CD8-positive, alpha-beta T cell (primary cell): ENCODE measurements at regions of chr20 and their contacts with region 1.

Region 1: DNA sequence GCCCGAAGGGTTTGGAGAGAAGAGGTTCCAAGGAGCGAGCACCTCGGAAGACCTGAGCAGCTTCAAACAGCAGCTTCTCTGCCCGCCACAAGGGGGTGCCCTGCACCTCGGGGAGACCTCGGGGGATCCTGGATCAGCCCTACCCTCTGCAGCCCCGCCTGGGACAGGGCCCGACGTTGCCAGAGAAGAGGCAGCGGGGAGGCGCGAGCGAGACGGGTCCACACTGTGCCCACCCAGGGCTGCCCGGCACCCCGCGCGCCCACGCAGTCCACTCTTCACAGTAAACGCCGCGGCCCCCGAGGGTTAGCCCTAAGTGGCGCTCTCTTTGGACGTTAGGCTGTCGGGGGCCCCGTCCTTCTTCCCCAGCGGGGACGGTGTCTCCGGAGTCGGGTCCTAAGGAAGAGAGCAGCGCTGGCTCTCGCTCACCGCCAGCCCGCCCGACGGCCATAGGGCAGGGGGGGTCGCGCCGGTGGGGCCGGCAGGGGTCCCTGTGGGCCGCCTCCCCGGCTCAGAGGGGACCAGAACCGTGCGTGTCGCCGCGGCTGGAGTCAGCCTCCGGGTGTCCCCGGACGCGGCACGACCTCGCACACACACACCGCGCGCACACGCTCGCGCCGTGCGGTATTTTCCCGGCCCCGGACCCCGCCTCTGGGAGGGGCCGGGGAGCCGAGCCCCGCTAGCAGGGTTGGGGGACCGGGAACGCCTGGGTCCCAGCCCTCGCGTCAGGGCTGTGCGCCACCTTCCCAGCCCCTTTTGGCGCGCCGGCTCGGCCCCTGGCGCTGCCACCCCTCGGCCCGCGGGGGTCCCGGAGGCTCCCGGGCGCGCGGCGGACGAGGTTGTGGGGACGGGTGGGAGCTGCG is 929 bp downstream of the CDH22 start:
- DNase-seq: peak; percentile 44 to 85 (median 77)
- ATAC-seq: peak; percentile 90
- H3K4me3 ChIP-seq: peak overlapping the region; percentile 32 to 37
- H3K4me3 Mint-ChIP-seq: peak overlapping the region; percentile 64
- H3K27ac ChIP-seq: no peak overlapping the region
- H3K27ac Mint-ChIP-seq: no peak overlapping the region
- H3K4me1 ChIP-seq: peaks cover 14% of the 10 kb centered on the region
- H3K4me1 Mint-ChIP-seq: peaks cover 14% of the 10 kb centered on the region
- H3K27me3 ChIP-seq: peaks cover 22 to 27% of the 10 kb centered on the region in 2 experiments
- H3K27me3 Mint-ChIP-seq: peaks cover 63% of the 10 kb centered on the region
- CTCF ChIP-seq: peak; percentile 86

Region 2: DNA sequence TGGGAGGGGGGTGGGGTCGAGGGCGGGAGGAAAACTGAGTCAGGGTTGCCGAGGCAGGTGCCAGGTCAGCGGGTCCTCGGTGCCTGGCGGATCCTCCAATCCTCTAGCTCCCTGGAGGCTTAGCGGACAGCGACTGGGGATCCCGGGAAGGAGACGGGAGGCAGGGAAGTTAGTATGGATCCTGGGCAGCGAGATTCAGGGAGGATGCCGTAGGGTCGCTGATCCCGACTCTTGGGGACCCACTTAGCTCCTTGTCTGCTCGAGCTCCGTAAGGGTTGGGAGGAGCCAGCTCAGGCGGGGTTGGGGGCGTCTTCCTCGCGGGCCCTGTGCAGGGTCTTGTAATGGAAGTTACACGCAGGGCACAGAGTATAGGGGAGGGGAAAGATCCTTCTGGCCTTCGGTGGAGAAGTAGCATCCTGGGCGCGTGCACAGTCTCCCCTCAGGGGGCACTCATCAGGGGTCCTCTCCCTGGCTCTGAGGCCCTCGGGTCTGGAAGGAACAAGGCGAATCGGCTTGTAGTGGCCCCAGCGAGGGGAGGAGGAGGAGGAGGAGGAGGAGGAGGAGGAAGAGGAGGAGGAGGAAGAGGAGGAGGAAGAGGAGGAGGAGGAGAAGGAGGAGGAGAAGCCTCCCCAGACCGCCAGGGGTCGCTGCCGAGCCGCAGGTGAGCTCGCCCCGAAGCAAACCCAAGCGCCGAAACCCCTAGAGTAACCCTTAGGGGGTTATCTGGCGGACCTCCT is 284.8 kb before region 1 on chr20:
- CTCF ChIA-PET with region 1: interaction called, 3 read pairs
- POLR2A ChIA-PET with region 1: no interaction called
- intact Hi-C with region 1: loop called in 1 of 2 experiments (anchors 5 kb)
- DNase-seq: peak; percentile 47 to 89 (median 79)
- ATAC-seq: peak; percentile 62
- H3K4me3 ChIP-seq: peak overlapping the region; percentile 22 to 42
- H3K4me3 Mint-ChIP-seq: peak overlapping the region; percentile 76
- H3K27ac ChIP-seq: no peak overlapping the region
- H3K27ac Mint-ChIP-seq: no peak overlapping the region
- H3K4me1 ChIP-seq: peaks cover 14% of the 10 kb centered on the region
- H3K4me1 Mint-ChIP-seq: peaks cover 20% of the 10 kb centered on the region
- H3K27me3 ChIP-seq: peaks cover 17 to 18% of the 10 kb centered on the region in 2 experiments
- H3K27me3 Mint-ChIP-seq: peaks cover 63% of the 10 kb centered on the region
- CTCF ChIP-seq: peak; percentile 58

Region 3: GRCh38 chr20:46363800-46364634 is 56.6 kb after region 1 on chr20:
- CTCF ChIA-PET with region 1: interaction called, 3 read pairs
- POLR2A ChIA-PET with region 1: no interaction called
- intact Hi-C with region 1: loop called (anchors 1 to 5 kb)
- DNase-seq: peak; percentile 70 to 94 (median 86)
- ATAC-seq: peak; percentile 67
- H3K4me3 ChIP-seq: peak overlapping the region; percentile 89 to 92
- H3K4me3 Mint-ChIP-seq: peak overlapping the region; percentile 90
- H3K27ac ChIP-seq: peak overlapping the region; percentile 97 to 98
- H3K27ac Mint-ChIP-seq: peak overlapping the region; percentile 97
- H3K4me1 ChIP-seq: peaks cover 70% of the 10 kb centered on the region
- H3K4me1 Mint-ChIP-seq: peaks cover 83% of the 10 kb centered on the region
- H3K27me3 ChIP-seq: no peaks in the 10 kb centered on the region
- H3K27me3 Mint-ChIP-seq: no peaks in the 10 kb centered on the region
- CTCF ChIP-seq: no peak

Region 4: GRCh38 chr20:46411637-46412036 is 104.3 kb after region 1 on chr20:
- CTCF ChIA-PET with region 1: interaction called, 39 read pairs
- POLR2A ChIA-PET with region 1: interaction called, 8 read pairs
- intact Hi-C with region 1: loop called (anchors 1 kb)
- DNase-seq: no peak
- ATAC-seq: no peak
- H3K4me3 ChIP-seq: no peak overlapping the region
- H3K4me3 Mint-ChIP-seq: no peak overlapping the region
- H3K27ac ChIP-seq: no peak overlapping the region
- H3K27ac Mint-ChIP-seq: no peak overlapping the region
- H3K4me1 ChIP-seq: peaks cover 13% of the 10 kb centered on the region
- H3K4me1 Mint-ChIP-seq: peaks cover 28% of the 10 kb centered on the region
- H3K27me3 ChIP-seq: no peaks in the 10 kb centered on the region
- H3K27me3 Mint-ChIP-seq: peaks cover 20% of the 10 kb centered on the region
- CTCF ChIP-seq: no peak

Region 5: GRCh38 chr20:46438156-46438750 is 130.9 kb after region 1 on chr20:
- CTCF ChIA-PET with region 1: interaction called, 25 read pairs
- POLR2A ChIA-PET with region 1: no interaction called
- intact Hi-C with region 1: loop called in 1 of 2 experiments (anchors 1 kb)
- DNase-seq: peak in 3 of 9 experiments; percentile 11 to 49 (median 46)
- ATAC-seq: peak; percentile 61
- H3K4me3 ChIP-seq: no peak overlapping the region
- H3K4me3 Mint-ChIP-seq: no peak overlapping the region
- H3K27ac ChIP-seq: no peak overlapping the region
- H3K27ac Mint-ChIP-seq: no peak overlapping the region
- H3K4me1 ChIP-seq: no peaks in the 10 kb centered on the region
- H3K4me1 Mint-ChIP-seq: no peaks in the 10 kb centered on the region
- H3K27me3 ChIP-seq: no peaks in the 10 kb centered on the region
- H3K27me3 Mint-ChIP-seq: peaks cover 48% of the 10 kb centered on the region
- CTCF ChIP-seq: no peak

Region 6: GRCh38 chr20:46681032-46681854 is 373.9 kb after region 1 on chr20:
- CTCF ChIA-PET with region 1: interaction called, 3 read pairs
- POLR2A ChIA-PET with region 1: no interaction called
- intact Hi-C with region 1: loop called in 1 of 2 experiments (anchors 1 kb)
- DNase-seq: peak; percentile 47 to 75 (median 68)
- ATAC-seq: peak; percentile 83
- H3K4me3 ChIP-seq: no peak overlapping the region
- H3K4me3 Mint-ChIP-seq: no peak overlapping the region
- H3K27ac ChIP-seq: no peak overlapping the region
- H3K27ac Mint-ChIP-seq: peak overlapping the region; percentile 43
- H3K4me1 ChIP-seq: peaks cover 18% of the 10 kb centered on the region
- H3K4me1 Mint-ChIP-seq: peaks cover 44% of the 10 kb centered on the region
- H3K27me3 ChIP-seq: no peaks in the 10 kb centered on the region
- H3K27me3 Mint-ChIP-seq: no peaks in the 10 kb centered on the region
- CTCF ChIP-seq: peak; percentile 79